ENCODE measurements at regions of chr19 and their contacts with region 1.

Region 1: DNA sequence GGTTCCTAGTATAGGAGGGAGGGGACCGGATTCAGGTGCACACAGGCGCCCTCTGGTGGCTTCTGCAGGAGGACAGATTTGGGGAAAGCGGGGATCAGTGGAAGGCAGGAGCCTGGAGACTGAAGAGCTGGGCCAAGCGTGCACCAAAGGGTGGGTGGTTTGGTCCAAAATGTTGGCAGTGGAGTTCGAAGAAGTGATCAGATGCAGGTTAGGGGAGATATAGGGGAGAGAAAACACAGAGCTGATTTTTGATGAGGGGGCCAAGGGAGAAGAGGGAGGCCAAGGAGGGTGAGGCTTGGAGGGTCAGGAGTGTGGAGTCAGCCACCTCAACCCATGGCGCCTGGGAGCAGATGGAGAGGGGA is 6.8 kb upstream of the CARM1 start:
- DNase-seq: peak; percentile 56
- ATAC-seq: peak; percentile 94
- H3K4me3 ChIP-seq: 0 out of 4 replicates have a peak overlapping the region, but pooled peaks of 1 of the 2 experiments have one; percentile 14
- H3K27ac ChIP-seq: no peak overlapping the region
- H3K4me1 ChIP-seq: peaks cover 3 to 19% of the 10 kb centered on the region in 2 experiments; a peak in 3 of 4 replicates
- H3K27me3 ChIP-seq: no peaks in the 10 kb centered on the region
- CTCF ChIP-seq: peak; percentile 89 to 96 (median 95)
- POLR2A ChIP-seq: no peak
- RAD21 ChIP-seq: peak; percentile 71

Region 2: DNA sequence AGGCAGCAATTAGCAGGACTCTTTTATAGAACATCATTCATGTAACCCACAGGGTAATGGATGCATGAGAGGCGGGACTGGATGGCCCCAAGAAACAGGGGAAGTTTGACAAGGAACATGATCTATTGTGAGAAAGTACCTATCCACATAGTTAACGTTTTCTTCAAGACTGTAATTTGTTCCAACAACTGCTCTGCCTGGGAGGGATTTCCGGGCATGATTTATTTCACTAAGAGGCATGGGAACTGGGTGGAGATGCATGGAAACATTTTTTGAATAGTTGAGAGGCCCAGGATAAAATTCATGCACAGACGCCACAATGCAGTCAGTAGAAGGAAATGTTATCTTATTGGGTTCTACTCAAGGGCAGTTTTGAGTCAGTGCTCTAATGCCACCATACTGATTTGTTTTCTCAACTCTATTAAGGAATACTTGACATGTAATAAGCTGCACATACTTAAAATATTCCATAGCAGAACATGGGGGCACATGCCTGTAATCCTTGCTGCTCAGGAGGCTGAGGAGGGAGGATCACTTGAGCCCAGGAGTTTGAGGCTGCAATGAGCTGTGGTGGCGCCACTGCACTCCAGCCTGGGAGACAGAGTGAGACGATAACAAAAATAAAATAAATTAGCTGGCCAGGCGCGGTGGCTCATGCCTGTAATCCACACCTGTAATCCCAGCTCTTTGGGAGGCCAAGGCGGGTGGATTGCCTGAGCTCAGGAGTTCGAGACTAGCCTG is 330.7 kb before region 1 on chr19:
- CTCF ChIA-PET with region 1: no interaction called
- POLR2A ChIA-PET with region 1: no interaction called
- RAD21 ChIA-PET with region 1: no interaction called
- intact Hi-C with region 1: no loop called
- DNase-seq: no peak
- ATAC-seq: no peak
- H3K4me3 ChIP-seq: no peak overlapping the region
- H3K27ac ChIP-seq: no peak overlapping the region
- H3K4me1 ChIP-seq: no peaks in the 10 kb centered on the region
- H3K27me3 ChIP-seq: no peaks in the 10 kb centered on the region
- CTCF ChIP-seq: no peak
- POLR2A ChIP-seq: no peak
- RAD21 ChIP-seq: no peak

Region 3: DNA sequence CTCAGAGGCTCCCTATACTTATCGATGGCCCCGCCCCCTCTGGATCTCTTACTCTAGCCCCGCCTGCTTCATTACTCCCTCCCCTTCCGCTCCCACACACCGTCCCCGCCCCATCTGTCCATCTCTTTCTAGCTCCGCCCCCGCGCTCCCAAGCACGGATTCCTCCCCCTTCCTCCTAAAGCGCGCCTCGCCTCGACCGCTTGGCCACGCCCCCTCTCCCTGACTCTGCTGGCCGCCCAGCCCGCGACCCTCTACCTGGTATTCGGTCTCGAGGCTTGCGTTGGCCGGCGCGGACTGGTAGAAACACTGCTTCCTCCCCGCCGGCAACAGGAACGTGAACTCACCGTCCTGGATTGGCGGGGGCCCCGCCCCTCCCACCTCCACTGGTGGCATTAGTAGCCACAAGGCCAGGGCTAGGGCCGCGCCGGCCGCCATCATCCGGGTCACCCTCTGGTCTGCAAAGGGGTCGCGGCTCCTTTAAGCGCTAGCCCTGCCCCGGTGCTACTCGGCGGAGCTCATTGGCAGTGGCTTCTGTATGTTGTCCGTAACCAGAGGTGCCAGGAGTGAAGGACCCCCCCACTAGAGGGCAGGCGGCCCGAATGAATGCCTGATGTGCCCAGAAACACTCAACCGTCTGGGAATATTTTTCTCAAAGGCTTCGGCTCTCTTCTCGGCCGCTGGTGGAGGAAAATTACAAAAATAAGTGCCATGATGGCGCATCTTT is 28.6 kb before region 1 on chr19 and contains the start of gene TMED1:
- CTCF ChIA-PET with region 1: interaction called, 52 read pairs
- POLR2A ChIA-PET with region 1: interaction called, 10 read pairs
- RAD21 ChIA-PET with region 1: interaction called in 1 of 2 experiments, 5 read pairs
- intact Hi-C with region 1: no loop called
- DNase-seq: peak; percentile 99
- ATAC-seq: peak; percentile 87
- H3K4me3 ChIP-seq: peak within 1 kb of the TSS; percentile 72 to 83
- H3K27ac ChIP-seq: peak within 1 kb of the TSS; percentile 94
- H3K4me1 ChIP-seq: peaks cover 10 to 22% of the 10 kb centered on the region in 2 experiments; a peak in 3 of 4 replicates
- H3K27me3 ChIP-seq: no peaks in the 10 kb centered on the region
- CTCF ChIP-seq: peak in 2 of 3 experiments; percentile 25 to 32; a peak in 5 of 6 replicates
- POLR2A ChIP-seq: no peak
- RAD21 ChIP-seq: peak; percentile 34
- total RNA-seq, gene TMED1: 26.3 TPM

Region 4: DNA sequence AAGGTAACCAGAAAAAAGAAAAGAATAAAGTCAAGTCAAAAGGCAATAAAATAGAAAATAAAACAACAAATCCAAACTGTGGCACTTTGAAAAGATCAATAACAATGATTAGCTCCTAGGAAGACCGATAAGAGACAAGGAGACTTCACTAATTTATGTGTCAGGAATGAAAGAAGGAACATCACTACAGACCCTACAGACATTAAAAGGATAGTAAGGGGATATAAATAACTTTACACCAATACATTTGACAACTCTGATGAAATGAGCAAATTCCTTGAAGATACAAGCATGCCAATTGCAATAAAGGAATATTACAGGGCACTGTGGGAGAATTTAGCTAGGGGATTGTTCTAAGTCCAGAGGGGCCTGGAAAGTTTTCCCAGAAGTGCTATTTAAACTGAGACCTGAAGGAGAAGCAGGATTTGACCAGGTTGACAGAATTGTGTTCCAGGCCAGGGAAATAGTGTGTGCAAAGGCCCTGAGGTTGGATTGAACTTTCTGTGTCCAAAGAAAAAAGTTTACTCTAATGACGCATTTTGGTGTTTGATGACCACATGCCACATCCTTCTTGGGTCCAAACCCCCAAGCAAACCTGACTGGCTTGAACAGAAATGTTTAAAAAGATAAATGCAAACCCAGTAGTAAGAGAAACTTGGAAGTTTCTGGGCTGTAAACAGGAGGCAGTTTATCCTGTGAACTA is 17.9 kb before region 1 on chr19:
- CTCF ChIA-PET with region 1: interaction called, 47 read pairs
- POLR2A ChIA-PET with region 1: interaction called, 3 read pairs
- RAD21 ChIA-PET with region 1: no interaction called
- intact Hi-C with region 1: no loop called
- DNase-seq: no peak
- ATAC-seq: no peak
- H3K4me3 ChIP-seq: no peak overlapping the region
- H3K27ac ChIP-seq: no peak overlapping the region
- H3K4me1 ChIP-seq: no peaks in the 10 kb centered on the region
- H3K27me3 ChIP-seq: no peaks in the 10 kb centered on the region
- CTCF ChIP-seq: no peak
- POLR2A ChIP-seq: no peak
- RAD21 ChIP-seq: no peak

Region 5: DNA sequence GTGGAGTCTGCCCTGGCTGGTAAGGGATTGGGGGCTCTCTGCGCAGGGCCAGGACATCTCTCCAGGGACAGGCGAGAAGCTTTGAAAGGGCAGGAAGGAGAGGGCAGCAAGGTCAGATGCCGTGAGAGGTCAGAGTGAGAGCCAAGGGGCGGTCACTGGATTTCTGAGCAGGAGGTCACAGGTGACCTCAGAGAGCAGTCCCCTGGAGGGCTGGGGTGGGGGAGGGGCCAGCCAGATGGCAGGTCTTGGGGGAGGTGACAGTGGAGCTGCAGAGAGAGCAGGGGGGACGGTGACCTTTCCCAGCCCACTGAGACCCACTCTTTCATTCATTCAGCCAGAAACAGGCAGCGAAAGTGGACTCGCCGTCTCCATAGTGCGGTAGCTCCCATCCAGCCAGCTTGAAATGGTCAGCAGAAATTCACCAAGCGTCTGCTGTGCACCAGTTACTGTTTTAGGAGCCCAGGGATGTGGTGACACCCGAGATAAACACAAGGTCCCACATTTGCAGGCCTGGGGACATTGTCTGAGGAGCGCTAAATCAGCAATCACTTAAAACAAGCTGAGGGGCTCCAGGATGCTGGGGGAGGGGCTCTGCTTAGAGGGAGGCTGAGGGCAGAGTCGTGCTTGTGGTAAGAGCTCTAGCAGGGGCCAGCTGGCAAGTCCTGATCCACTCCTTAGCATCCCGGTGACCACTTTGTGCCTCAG is 17.0 kb after region 1 on chr19:
- CTCF ChIA-PET with region 1: interaction called, 15 read pairs
- POLR2A ChIA-PET with region 1: interaction called, 3 read pairs
- RAD21 ChIA-PET with region 1: no interaction called
- intact Hi-C with region 1: no loop called
- DNase-seq: no peak
- ATAC-seq: no peak
- H3K4me3 ChIP-seq: no peak overlapping the region
- H3K27ac ChIP-seq: no peak overlapping the region
- H3K4me1 ChIP-seq: peaks cover 31 to 95% of the 10 kb centered on the region in 2 experiments
- H3K27me3 ChIP-seq: no peaks in the 10 kb centered on the region
- CTCF ChIP-seq: no peak
- POLR2A ChIP-seq: no peak
- RAD21 ChIP-seq: no peak